Right ventricle myocardium inferior (tissue), 1 donor: ENCODE measurements at regions of chr5 and their contacts with region 1.

Region 1: GRCh38 chr5:56328753-56329560 is 95.8 kb upstream of the ANKRD55 start:
- DNase-seq: no peak
- ATAC-seq: no peak

Region 2: GRCh38 chr5:56286015-56286884 is 42.7 kb before region 1 on chr5:
- intact Hi-C with region 1: loop called (anchors 5 kb)
- DNase-seq: no peak
- ATAC-seq: no peak

Region 3: GRCh38 chr5:56375011-56375410 is 46.1 kb after region 1 on chr5:
- intact Hi-C with region 1: loop called (anchors 1 kb)
- DNase-seq: peak; percentile 50
- ATAC-seq: peak; percentile 94